ENCODE measurements at regions of chr1 and their contacts with region 1.

Region 1: GRCh38 chr1:230084138-230084880 is 17.3 kb downstream of the GALNT2 start:
- DNase-seq: peak; percentile 99
- H3K4me3 ChIP-seq: peak overlapping the region in 2 of 3 experiments; percentile 28 to 38
- H3K27ac ChIP-seq: peak overlapping the region; percentile 96
- H3K4me1 ChIP-seq: peaks cover 52% of the 10 kb centered on the region
- H3K27me3 ChIP-seq: no peaks in the 10 kb centered on the region
- CTCF ChIP-seq: no peak

Region 2: DNA sequence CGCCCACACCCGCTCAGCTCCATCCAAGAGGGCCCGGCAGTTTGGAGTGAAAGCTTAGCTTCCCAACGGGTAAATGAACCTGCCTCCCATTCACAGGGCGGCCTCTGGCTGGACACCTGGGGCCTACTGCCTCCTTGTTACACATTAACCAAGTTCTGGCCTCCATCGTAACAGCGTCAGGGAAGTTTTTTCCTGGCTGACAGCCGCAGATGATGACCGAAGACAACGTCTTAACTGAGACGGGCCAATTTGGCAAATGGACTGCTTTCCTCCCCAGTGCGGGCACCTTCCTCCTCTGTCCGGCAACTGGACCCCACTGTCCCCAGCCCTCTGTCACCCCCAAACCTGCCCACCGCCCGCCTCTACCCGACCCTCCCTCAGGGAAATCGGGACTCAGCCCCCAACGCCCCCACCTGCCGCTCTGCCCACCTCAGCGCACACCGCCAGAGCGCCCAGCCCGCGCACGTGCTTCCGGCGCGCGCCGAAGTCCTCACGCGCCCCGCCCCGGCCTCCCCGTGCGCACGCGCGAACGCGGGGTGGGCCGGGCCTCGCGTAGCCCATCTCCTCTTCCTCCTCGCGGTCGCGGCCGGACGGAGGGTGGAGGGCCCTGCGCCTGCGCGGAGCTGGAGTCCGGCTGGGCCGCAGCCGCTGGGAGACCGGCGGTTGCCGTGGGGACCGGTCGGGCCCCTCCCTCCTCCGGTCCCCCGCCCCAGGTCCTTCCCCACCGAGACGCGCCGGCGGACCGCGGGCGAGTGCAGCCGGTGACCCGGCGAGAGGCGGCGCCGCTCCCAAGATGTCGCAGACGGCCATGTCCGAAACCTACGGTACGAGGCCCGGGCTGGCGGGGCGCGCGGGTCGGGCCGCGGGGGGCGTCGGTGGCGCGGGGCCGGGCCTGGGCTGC is 813.5 kb before region 1 on chr1 and contains the start of gene RAB4A:
- CTCF ChIA-PET with region 1: no interaction called
- dilution Hi-C with region 1: no loop called
- in situ Hi-C with region 1: no loop called
- intact Hi-C with region 1: no loop called
- DNase-seq: peak; percentile 81
- H3K4me3 ChIP-seq: peak within 1 kb of the TSS; percentile 63 to 78 (median 77)
- H3K27ac ChIP-seq: peak within 1 kb of the TSS; percentile 76
- H3K4me1 ChIP-seq: peaks cover 40% of the 10 kb centered on the region
- H3K27me3 ChIP-seq: no peaks in the 10 kb centered on the region
- CTCF ChIP-seq: no peak
- total RNA-seq, gene RAB4A: 46.5 to 59.2 TPM

Region 3: DNA sequence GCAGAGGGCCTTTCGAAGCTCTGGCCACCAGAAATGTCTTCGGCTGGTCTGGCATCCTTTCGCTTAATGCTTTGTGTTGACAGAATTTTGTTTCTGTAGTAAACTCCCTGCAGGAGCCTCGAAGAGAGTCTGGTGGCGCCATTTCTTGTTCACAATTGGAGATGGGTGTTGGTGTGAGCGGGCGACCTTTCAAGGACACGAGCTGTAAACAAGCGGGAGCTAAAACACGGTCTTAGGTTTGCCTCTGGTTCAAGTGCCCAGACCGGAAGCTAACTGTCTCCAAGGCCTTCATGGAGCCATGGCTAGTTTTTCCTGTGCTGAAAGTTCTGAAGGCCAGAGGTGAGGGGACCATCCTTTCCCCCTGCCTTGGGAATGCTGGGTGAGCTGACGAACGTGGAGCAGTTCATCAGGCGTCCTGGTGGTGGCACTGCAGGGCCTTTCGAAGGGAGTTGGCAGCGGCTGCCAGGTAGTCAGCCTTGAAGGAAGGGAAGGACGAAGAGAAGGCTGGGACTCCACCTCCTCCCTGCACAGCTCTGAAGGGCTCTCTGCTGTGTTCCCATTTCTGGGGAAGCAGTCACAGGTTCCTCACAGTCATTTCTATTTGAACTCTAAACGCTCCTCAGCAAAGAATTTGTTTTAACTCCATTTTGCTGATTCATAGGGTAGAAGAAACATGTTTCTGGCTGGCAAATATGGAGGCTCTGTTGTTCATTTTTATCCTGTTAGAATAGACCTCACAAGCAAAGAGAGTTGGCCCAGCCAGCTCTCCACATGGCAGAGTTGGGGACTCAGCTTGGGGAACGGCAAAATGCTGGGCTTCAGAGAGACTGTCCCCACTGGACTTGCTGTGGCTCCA is 423.1 kb before region 1 on chr1:
- CTCF ChIA-PET with region 1: no interaction called
- dilution Hi-C with region 1: no loop called
- in situ Hi-C with region 1: loop called in 1 of 2 experiments (anchors 10 kb)
- intact Hi-C with region 1: loop called (anchors 1 kb)
- DNase-seq: peak; percentile 51
- H3K4me3 ChIP-seq: no peak overlapping the region
- H3K27ac ChIP-seq: no peak overlapping the region
- H3K4me1 ChIP-seq: peaks cover 8% of the 10 kb centered on the region
- H3K27me3 ChIP-seq: no peaks in the 10 kb centered on the region
- CTCF ChIP-seq: peak; percentile 87 to 96

Region 4: DNA sequence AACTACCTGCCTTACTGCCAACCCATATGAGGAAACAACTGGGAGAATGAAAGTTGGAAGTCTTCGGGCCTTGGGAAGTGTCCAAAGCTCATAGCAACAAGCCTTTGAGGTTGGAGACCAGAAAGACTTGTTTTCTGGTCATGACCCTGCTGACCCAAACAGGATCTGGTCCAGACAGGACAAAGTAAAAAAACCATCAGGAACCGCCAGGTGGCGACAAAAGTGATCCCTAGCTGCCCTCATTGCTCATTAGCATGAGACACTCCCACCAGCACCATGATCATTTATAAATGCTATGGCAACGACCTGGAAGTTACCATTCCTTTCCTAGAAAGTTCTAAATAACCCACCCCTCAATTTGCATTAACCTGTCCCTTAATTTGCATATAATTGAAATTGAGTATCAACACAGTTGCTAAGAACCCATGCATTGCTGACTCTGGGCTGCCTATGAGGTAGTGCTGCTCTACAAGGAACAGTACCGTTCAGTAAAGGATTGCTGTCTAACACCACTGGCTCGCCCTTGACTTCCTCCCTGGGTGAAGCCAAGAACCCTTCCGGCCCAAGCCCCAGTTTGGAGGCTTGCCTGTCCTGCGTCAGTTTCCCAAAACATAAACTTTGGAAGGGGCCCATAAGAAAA is 369.2 kb before region 1 on chr1:
- CTCF ChIA-PET with region 1: no interaction called
- dilution Hi-C with region 1: no loop called
- in situ Hi-C with region 1: no loop called
- intact Hi-C with region 1: loop called (anchors 5 kb)
- DNase-seq: peak; percentile 32
- H3K4me3 ChIP-seq: no peak overlapping the region
- H3K27ac ChIP-seq: no peak overlapping the region
- H3K4me1 ChIP-seq: no peaks in the 10 kb centered on the region
- H3K27me3 ChIP-seq: no peaks in the 10 kb centered on the region
- CTCF ChIP-seq: peak; percentile 38 to 60

Region 5: DNA sequence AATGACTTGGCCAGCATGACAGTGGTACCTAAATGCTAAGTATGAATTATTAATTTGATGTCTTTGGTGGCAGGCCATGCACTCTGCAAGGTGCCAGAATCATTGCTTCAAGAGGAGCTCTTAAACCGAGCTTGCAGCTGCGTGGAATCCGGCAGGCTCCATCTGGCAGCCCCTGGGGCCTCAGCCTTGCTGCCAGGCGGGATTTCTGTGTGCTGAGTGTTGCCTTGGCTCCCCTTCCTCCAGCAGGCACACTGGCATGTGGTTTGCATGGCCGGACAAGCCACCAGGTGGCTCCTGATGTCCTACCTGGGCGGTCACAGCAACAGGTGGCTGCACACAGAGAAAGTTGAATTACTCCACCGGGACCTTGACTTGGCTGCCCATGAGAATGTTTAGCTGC is 302.9 kb before region 1 on chr1:
- CTCF ChIA-PET with region 1: no interaction called
- dilution Hi-C with region 1: no loop called
- in situ Hi-C with region 1: no loop called
- intact Hi-C with region 1: loop called (anchors 1 kb)
- DNase-seq: no peak
- H3K4me3 ChIP-seq: no peak overlapping the region
- H3K27ac ChIP-seq: no peak overlapping the region
- H3K4me1 ChIP-seq: no peaks in the 10 kb centered on the region
- H3K27me3 ChIP-seq: no peaks in the 10 kb centered on the region
- CTCF ChIP-seq: peak in 1 of 2 donors; percentile 53

Region 6: DNA sequence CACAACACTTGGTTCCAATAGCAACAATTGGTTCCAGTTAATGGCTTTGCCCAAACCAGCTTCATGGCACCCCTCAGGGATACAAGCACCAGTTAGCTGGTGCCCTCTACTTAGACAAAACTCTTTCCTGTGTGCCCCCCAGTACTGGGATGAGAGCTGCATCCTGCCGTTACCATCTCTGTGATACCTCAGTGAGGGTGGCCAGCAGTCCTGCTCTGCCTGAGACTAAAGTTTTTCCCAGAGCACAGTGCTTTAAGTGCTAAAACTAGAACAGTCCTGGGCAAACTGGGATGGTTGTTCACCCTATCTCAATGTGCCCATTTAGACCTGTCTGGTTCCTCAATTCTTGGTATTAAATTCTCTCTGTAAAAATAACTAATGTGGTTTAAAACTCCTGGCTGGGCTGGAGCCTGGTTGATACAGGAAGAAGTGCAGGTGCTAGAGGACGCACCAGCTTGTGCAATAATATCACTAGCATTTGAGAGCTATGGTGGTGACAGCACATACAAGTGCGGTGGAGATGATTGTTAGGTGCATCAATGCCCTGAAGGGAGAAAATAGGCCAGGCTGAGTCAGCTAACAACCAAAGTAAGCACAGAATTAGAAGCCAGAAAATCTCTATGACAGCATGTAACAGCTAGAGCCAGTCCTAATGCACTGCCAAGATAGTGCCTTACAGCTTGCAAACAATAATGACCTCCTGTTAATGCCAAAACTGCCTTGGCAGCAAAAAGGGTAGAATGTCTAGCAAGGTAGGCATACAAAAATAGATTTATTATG is 197.1 kb before region 1 on chr1:
- CTCF ChIA-PET with region 1: no interaction called
- dilution Hi-C with region 1: no loop called
- in situ Hi-C with region 1: no loop called
- intact Hi-C with region 1: loop called (anchors 5 kb)
- DNase-seq: peak; percentile 97
- H3K4me3 ChIP-seq: no peak overlapping the region
- H3K27ac ChIP-seq: no peak overlapping the region
- H3K4me1 ChIP-seq: peaks cover 19% of the 10 kb centered on the region
- H3K27me3 ChIP-seq: peaks cover 10% of the 10 kb centered on the region
- CTCF ChIP-seq: no peak

Region 7: DNA sequence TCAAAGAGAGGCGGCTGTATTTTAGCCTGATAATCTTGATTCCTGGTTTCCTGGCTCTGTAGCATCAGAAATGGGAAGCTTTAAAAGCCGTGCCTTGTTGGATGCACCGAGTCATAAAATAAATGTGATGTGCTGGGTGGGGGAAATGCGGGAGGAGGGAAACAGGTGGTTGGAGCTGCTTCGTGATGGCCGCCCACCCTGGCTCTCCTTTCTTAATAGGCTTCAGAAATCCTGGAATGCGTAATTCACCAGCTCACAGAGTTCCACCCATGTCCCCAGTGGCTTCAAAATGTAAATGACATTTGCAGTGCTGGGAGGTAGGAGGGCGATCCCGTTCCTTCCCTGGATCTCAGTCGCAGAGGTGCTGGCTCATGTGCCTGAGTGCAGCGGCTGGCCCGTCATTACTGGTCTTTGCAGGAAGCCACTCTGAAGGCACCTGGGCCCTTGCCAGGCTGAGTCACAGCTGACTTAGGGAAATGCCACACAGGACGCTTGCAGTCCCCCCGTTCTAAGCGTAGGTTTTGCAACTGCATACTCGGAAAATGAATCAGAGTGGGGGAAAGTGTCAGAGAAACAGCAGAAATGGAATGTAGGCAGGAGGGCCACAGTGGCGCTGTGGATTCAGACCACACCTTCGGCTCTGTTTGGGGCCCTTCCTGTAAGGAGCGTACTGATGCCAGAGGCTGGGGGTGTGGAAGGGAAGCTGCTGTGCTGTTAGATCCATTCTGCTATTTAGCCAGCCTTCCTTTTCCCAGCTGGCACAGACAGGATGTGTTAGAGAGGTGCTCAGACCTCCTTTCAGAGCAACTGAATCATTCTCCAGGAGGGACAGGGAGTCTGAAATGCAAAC is 20.3 kb after region 1 on chr1:
- CTCF ChIA-PET with region 1: no interaction called
- dilution Hi-C with region 1: no loop called
- in situ Hi-C with region 1: no loop called
- intact Hi-C with region 1: loop called (anchors 1 kb)
- DNase-seq: peak; percentile 99
- H3K4me3 ChIP-seq: peak overlapping the region in 1 of 3 experiments; percentile 12
- H3K27ac ChIP-seq: peak overlapping the region; percentile 75
- H3K4me1 ChIP-seq: peaks cover 36% of the 10 kb centered on the region
- H3K27me3 ChIP-seq: no peaks in the 10 kb centered on the region
- CTCF ChIP-seq: no peak

Region 8: DNA sequence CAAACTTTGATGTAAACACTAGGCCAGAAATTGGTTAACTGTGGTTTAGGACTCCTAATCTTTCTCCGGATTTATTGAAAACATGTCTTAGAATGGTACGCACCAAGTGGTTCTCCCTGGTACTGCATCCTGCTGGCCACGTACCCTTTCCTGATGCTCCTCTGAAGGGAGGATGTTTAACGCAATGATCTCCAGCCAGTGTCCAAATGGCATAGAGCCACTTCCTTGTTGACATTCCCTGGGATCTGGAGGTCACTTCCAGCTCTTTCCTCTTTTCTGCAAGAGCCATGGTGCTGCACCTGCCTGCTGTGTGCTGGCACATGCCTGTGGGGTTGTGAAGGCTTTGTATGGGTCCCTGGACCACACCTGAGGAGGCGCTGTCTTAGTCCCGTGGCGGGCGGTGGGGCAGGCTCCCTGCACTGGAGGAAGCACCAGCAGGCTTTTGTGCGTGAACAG is 36.6 kb after region 1 on chr1:
- CTCF ChIA-PET with region 1: no interaction called
- dilution Hi-C with region 1: no loop called
- in situ Hi-C with region 1: no loop called
- intact Hi-C with region 1: loop called (anchors 2 kb)
- DNase-seq: no peak
- H3K4me3 ChIP-seq: no peak overlapping the region
- H3K27ac ChIP-seq: no peak overlapping the region
- H3K4me1 ChIP-seq: peaks cover 52% of the 10 kb centered on the region
- H3K27me3 ChIP-seq: no peaks in the 10 kb centered on the region
- CTCF ChIP-seq: peak; percentile 50 to 61